ENCODE measurements at regions of chrX and their contacts with region 1.

Region 1: GRCh38 chrX:107672955-107673378 is 44.7 kb downstream of the PRPS1 start:
- DNase-seq: peak; percentile 88
- ATAC-seq: peak; percentile 46
- H3K4me3 ChIP-seq: peak overlapping the region in 2 of 5 experiments; percentile 27 to 53
- H3K4me3 Mint-ChIP-seq: peak overlapping the region; percentile 83
- H3K27ac ChIP-seq: peak overlapping the region; percentile 99 to 100
- H3K27ac Mint-ChIP-seq: peak overlapping the region; percentile 98
- H3K4me1 ChIP-seq: peaks cover 38 to 52% of the 10 kb centered on the region in 2 donors
- H3K4me1 Mint-ChIP-seq: peaks cover 48% of the 10 kb centered on the region
- H3K27me3 ChIP-seq: no peaks in the 10 kb centered on the region
- H3K27me3 Mint-ChIP-seq: no peaks in the 10 kb centered on the region
- CTCF ChIP-seq: peak; percentile 65

Region 2: DNA sequence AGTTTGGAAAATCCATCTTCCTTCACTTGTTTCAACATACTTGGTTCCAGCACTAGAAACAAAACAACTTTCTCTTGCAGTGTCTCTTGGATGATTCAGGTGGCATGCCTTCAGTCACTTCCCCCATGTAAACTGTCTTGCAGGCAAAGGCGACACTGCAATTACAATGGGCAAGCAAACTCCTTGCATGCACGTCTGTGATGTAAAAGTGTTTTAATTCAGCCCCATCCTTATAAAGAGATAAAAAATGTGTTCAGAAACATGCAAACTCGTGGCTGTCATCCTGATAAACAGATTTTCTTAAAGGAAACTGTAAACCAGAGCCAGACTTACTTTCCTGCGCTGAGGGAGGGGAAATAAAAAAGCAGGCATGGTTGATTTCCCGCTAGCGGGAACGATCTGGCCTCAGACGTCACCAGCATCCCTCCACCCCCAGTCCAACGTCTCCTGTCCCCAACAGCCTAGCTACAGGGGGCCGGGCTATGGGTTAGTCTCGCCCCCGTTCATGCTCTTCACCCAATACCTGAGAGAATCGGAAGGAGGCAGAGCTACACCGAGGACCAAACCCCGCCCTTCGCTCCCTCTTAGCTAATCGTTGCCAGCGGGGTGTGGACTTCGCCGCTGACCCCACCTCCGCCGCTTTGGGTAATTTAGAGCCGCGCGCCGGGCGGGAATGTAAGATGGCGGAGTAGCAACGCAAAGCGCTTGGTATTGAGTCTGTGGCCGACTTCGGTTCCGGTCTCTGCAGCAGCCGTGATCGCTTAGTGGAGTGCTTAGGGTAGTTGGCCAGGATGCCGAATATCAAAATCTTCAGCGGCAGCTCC is 44.9 kb before region 1 on chrX and contains the start of gene PRPS1:
- CTCF ChIA-PET with region 1: interaction called, 8 read pairs
- POLR2A ChIA-PET with region 1: no interaction called
- intact Hi-C with region 1: loop called (anchors 1 kb)
- DNase-seq: peak; percentile 91
- ATAC-seq: peak; percentile 99
- H3K4me3 ChIP-seq: peak within 1 kb of the TSS; percentile 51 to 83 (median 75)
- H3K4me3 Mint-ChIP-seq: peak within 1 kb of the TSS; percentile 97
- H3K27ac ChIP-seq: peak within 1 kb of the TSS; percentile 80
- H3K27ac Mint-ChIP-seq: peak within 1 kb of the TSS; percentile 92
- H3K4me1 ChIP-seq: peaks cover 8 to 19% of the 10 kb centered on the region in 2 donors
- H3K4me1 Mint-ChIP-seq: peaks cover 31% of the 10 kb centered on the region
- H3K27me3 ChIP-seq: no peaks in the 10 kb centered on the region
- H3K27me3 Mint-ChIP-seq: no peaks in the 10 kb centered on the region
- CTCF ChIP-seq: no peak
- total RNA-seq, gene PRPS1: 45.0 and 52.1 TPM in 2 replicates

Region 3: GRCh38 chrX:107654872-107655761 is 17.9 kb before region 1 on chrX:
- CTCF ChIA-PET with region 1: interaction called, 40 read pairs
- POLR2A ChIA-PET with region 1: no interaction called
- intact Hi-C with region 1: loop called (anchors 2 kb)
- DNase-seq: peak; percentile 74
- ATAC-seq: peak; percentile 85
- H3K4me3 ChIP-seq: no peak overlapping the region
- H3K4me3 Mint-ChIP-seq: no peak overlapping the region
- H3K27ac ChIP-seq: no peak overlapping the region
- H3K27ac Mint-ChIP-seq: peak overlapping the region; percentile 26
- H3K4me1 ChIP-seq: peaks cover 7% of the 10 kb centered on the region in 2 donors
- H3K4me1 Mint-ChIP-seq: peaks cover 9% of the 10 kb centered on the region
- H3K27me3 ChIP-seq: no peaks in the 10 kb centered on the region
- H3K27me3 Mint-ChIP-seq: no peaks in the 10 kb centered on the region
- CTCF ChIP-seq: peak; percentile 78

Region 4: GRCh38 chrX:107710617-107711391 is 37.8 kb after region 1 on chrX:
- CTCF ChIA-PET with region 1: interaction called, 318 read pairs
- POLR2A ChIA-PET with region 1: interaction called, 375 read pairs
- intact Hi-C with region 1: loop called (anchors 1 kb)
- DNase-seq: peak; percentile 90
- ATAC-seq: peak; percentile 61
- H3K4me3 ChIP-seq: peak overlapping the region in 4 of 5 experiments; percentile 18 to 49 (median 21)
- H3K4me3 Mint-ChIP-seq: peak overlapping the region; percentile 97
- H3K27ac ChIP-seq: peak overlapping the region; percentile 96 to 99
- H3K27ac Mint-ChIP-seq: peak overlapping the region; percentile 99
- H3K4me1 ChIP-seq: peaks cover 44 to 58% of the 10 kb centered on the region in 2 donors
- H3K4me1 Mint-ChIP-seq: peaks cover 52% of the 10 kb centered on the region
- H3K27me3 ChIP-seq: no peaks in the 10 kb centered on the region
- H3K27me3 Mint-ChIP-seq: no peaks in the 10 kb centered on the region
- CTCF ChIP-seq: no peak

Region 5: DNA sequence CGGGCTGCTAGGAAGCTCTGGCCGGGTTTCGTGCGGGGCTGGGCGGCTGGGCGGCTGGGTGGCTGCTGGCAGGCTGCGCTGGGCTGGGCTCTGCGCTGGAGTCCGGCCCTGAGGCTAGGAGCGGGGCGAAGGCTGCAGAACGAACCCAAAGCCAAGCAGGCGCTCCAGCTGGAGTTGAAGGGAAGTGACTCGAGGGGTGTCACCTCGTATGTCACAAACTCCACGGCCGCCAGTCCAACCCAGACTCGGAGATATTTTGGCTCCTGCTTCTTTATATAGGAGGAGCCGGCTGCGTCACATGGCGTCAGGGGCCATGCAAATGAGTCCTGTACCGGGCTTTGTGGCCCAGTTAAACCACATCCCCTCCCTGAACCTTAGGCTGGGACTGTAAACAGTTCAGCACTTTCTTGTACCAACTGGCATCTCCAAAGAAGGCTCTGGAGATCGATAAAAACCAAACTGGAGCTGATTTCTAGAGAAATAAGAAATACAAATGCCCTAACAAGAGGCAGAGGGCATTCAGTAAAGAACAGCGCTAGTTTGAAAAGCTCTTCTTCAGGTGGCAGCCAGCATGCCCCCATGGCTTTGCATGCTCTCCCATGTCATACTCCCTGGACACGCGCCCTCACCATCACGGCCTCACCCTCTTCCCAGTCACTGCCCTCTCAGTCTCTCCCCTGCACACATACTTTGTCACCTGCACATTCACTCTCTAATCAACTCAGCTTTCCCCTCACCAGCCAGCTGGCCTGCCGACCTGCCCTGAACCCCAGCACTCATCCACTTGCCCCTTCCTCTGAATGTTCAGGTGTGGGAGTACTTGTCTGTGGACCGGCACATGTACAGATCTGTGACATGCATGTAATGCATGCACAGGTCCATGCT is 44.1 kb after region 1 on chrX:
- CTCF ChIA-PET with region 1: interaction called, 318 read pairs
- POLR2A ChIA-PET with region 1: interaction called, 375 read pairs
- intact Hi-C with region 1: loop called (anchors 1 kb)
- DNase-seq: peak; percentile 94
- ATAC-seq: peak; percentile 60
- H3K4me3 ChIP-seq: peak overlapping the region; percentile 59 to 96 (median 86)
- H3K4me3 Mint-ChIP-seq: peak overlapping the region; percentile 97
- H3K27ac ChIP-seq: peak overlapping the region; percentile 99
- H3K27ac Mint-ChIP-seq: peak overlapping the region; percentile 100
- H3K4me1 ChIP-seq: peaks cover 63 to 85% of the 10 kb centered on the region in 2 donors
- H3K4me1 Mint-ChIP-seq: peaks cover 75% of the 10 kb centered on the region
- H3K27me3 ChIP-seq: no peaks in the 10 kb centered on the region
- H3K27me3 Mint-ChIP-seq: no peaks in the 10 kb centered on the region
- CTCF ChIP-seq: no peak

Region 6: GRCh38 chrX:107729547-107730297 is 56.8 kb after region 1 on chrX:
- CTCF ChIA-PET with region 1: no interaction called
- POLR2A ChIA-PET with region 1: no interaction called
- intact Hi-C with region 1: no loop called
- DNase-seq: no peak
- ATAC-seq: peak; percentile 41
- H3K4me3 ChIP-seq: no peak overlapping the region
- H3K4me3 Mint-ChIP-seq: no peak overlapping the region
- H3K27ac ChIP-seq: no peak overlapping the region
- H3K27ac Mint-ChIP-seq: no peak overlapping the region
- H3K4me1 ChIP-seq: peaks cover 0 to 4% of the 10 kb centered on the region in 2 donors
- H3K4me1 Mint-ChIP-seq: peaks cover 12% of the 10 kb centered on the region
- H3K27me3 ChIP-seq: no peaks in the 10 kb centered on the region
- H3K27me3 Mint-ChIP-seq: no peaks in the 10 kb centered on the region
- CTCF ChIP-seq: no peak

Region 7: DNA sequence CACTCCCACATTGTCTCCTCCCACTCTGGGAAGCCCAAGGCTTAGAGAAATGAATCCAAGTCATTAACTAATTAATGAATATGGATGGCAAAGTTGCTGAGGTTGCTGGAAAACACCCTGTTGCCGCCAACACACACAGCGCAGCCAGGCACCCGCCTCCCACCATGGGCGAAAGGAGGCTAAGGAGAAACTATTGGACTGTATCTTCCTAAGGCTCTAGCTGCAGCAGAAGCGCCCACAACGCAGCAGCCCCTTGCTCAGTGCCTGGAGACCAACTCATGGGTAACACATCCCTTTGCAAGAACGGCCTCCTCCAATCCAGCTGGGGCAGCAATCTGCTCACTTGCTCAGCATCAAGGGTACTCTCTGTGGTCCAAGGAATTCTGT is 68.4 kb after region 1 on chrX:
- CTCF ChIA-PET with region 1: interaction called, 11 read pairs
- POLR2A ChIA-PET with region 1: interaction called, 9 read pairs
- intact Hi-C with region 1: loop called (anchors 1 kb)
- DNase-seq: no peak
- ATAC-seq: no peak
- H3K4me3 ChIP-seq: peak overlapping the region in 4 of 5 experiments; percentile 5 to 37 (median 18)
- H3K4me3 Mint-ChIP-seq: peak overlapping the region; percentile 88
- H3K27ac ChIP-seq: peak overlapping the region; percentile 62 to 68
- H3K27ac Mint-ChIP-seq: peak overlapping the region; percentile 98
- H3K4me1 ChIP-seq: peaks cover 14 to 19% of the 10 kb centered on the region in 2 donors
- H3K4me1 Mint-ChIP-seq: peaks cover 15% of the 10 kb centered on the region
- H3K27me3 ChIP-seq: no peaks in the 10 kb centered on the region
- H3K27me3 Mint-ChIP-seq: no peaks in the 10 kb centered on the region
- CTCF ChIP-seq: no peak

Region 8: DNA sequence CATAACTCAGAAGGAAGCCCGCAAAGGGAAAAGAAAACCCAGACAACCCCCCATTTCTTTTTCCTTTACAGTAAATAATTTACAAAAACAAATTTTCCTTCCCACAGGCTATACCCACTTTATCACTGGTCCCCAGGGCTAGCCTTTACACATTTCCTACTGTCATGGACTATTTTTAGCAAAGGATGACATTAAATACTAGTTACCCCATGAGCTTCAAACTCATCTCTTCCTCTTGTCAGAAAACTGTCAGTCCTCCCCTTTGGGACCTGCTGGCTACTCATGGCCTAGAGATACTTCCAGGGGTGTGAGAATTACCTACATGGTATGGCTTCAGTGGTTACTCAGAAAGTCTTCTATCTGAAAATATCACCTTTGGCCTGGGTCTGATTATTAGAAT is 90.7 kb after region 1 on chrX:
- CTCF ChIA-PET with region 1: interaction called, 3 read pairs
- POLR2A ChIA-PET with region 1: interaction called, 10 read pairs
- intact Hi-C with region 1: no loop called
- DNase-seq: no peak
- ATAC-seq: no peak
- H3K4me3 ChIP-seq: no peak overlapping the region
- H3K4me3 Mint-ChIP-seq: no peak overlapping the region
- H3K27ac ChIP-seq: no peak overlapping the region
- H3K27ac Mint-ChIP-seq: no peak overlapping the region
- H3K4me1 ChIP-seq: no peaks in the 10 kb centered on the region
- H3K4me1 Mint-ChIP-seq: no peaks in the 10 kb centered on the region
- H3K27me3 ChIP-seq: no peaks in the 10 kb centered on the region
- H3K27me3 Mint-ChIP-seq: no peaks in the 10 kb centered on the region
- CTCF ChIP-seq: no peak

Region 9: GRCh38 chrX:108892516-108892915 is 1219.5 kb after region 1 on chrX:
- CTCF ChIA-PET with region 1: no interaction called
- POLR2A ChIA-PET with region 1: no interaction called
- intact Hi-C with region 1: no loop called
- DNase-seq: no peak
- ATAC-seq: no peak
- H3K4me3 ChIP-seq: no peak overlapping the region
- H3K4me3 Mint-ChIP-seq: no peak overlapping the region
- H3K27ac ChIP-seq: no peak overlapping the region
- H3K27ac Mint-ChIP-seq: no peak overlapping the region
- H3K4me1 ChIP-seq: no peaks in the 10 kb centered on the region
- H3K4me1 Mint-ChIP-seq: no peaks in the 10 kb centered on the region
- H3K27me3 ChIP-seq: no peaks in the 10 kb centered on the region
- H3K27me3 Mint-ChIP-seq: no peaks in the 10 kb centered on the region
- CTCF ChIP-seq: no peak